ENCODE measurements at regions of chr1 and their contacts with region 1.

Region 1: DNA sequence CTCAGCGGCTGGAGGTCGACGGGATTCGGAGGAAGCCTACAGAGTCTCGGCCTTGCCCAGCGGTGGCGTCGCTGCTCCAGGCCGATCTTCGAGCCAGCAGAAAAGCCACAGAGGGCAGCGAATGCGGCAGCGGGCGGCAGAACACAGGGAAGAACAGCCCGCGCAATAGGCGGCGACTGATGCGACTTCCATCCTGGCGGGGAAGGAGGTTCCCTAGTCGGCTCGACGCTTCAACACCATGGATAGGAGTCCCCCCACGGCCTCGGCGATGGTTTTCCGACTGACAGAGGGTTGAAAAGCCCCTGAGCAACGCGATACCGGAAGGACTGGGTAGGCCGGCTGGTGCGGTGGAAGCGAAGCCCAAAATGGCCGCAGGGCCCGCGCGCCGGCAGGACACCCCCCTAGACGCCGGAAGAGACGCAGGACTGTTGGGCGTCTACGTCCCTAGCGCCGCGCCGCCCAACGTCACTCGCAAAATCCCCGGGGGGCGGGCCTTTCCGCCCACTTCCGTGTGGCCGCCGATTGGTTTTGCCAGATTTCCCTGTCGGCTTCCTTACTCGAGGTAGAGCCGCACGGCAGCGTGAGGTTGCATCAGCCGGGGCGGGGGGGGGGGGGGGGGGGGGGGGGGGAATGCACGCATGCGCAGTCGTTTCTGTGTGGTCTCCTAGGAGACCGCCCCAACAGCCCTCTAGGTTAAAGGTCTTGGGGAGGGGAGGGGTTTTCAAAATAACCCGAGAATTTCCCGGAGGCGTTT is at the start of gene PPP1R15B:
- DNase-seq: peak; percentile 98
- ATAC-seq: peak; percentile 94
- H3K4me3 ChIP-seq: peak within 1 kb of the TSS; percentile 87
- H3K27ac ChIP-seq: peak within 1 kb of the TSS; percentile 99
- H3K4me1 ChIP-seq: no peaks in the 10 kb centered on the region
- H3K27me3 ChIP-seq: no peaks in the 10 kb centered on the region
- CTCF ChIP-seq: no peak
- EP300 ChIP-seq: 0 out of 4 replicates have a peak, but pooled peaks of 1 of the 2 experiments have one; percentile 29
- POLR2A ChIP-seq: peak; percentile 96
- RAD21 ChIP-seq: no peak
- polyA plus RNA-seq, gene PPP1R15B: 13.9 to 17.1 TPM

Region 2: GRCh38 chr1:204335085-204335484 is 76.5 kb before region 1 on chr1:
- CTCF ChIA-PET with region 1: no interaction called
- POLR2A ChIA-PET with region 1: no interaction called
- RAD21 ChIA-PET with region 1: no interaction called
- SMC1A ChIA-PET with region 1: no interaction called
- in situ Hi-C with region 1: no loop called
- intact Hi-C with region 1: no loop called
- DNase-seq: no peak
- ATAC-seq: no peak
- H3K4me3 ChIP-seq: no peak overlapping the region
- H3K27ac ChIP-seq: no peak overlapping the region
- H3K4me1 ChIP-seq: no peaks in the 10 kb centered on the region
- H3K27me3 ChIP-seq: peaks cover 0 to 6% of the 10 kb centered on the region in 2 experiments; a peak in 2 of 4 replicates
- CTCF ChIP-seq: no peak
- EP300 ChIP-seq: no peak
- POLR2A ChIP-seq: no peak
- RAD21 ChIP-seq: no peak

Region 3: GRCh38 chr1:204377795-204378608 is 33.6 kb before region 1 on chr1:
- CTCF ChIA-PET with region 1: interaction called, 5 read pairs
- POLR2A ChIA-PET with region 1: interaction called, 6 read pairs
- RAD21 ChIA-PET with region 1: interaction called, 7 read pairs
- SMC1A ChIA-PET with region 1: interaction called, 11 read pairs
- in situ Hi-C with region 1: no loop called
- intact Hi-C with region 1: no loop called
- DNase-seq: no peak
- ATAC-seq: peak; percentile 89
- H3K4me3 ChIP-seq: peak overlapping the region; percentile 57; the same call in 1 of the 2 replicates
- H3K27ac ChIP-seq: no peak overlapping the region
- H3K4me1 ChIP-seq: peaks cover 6% of the 10 kb centered on the region
- H3K27me3 ChIP-seq: peaks cover 4 to 5% of the 10 kb centered on the region in 2 experiments; a peak in 3 of 4 replicates
- CTCF ChIP-seq: no peak
- EP300 ChIP-seq: peak in 1 of 2 experiments; percentile 73; a peak in 2 of 4 replicates
- POLR2A ChIP-seq: no peak
- RAD21 ChIP-seq: no peak